IMR-90 (cell line): ENCODE measurements at regions of chr1 and their contacts with region 1.

Region 1: GRCh38 chr1:222455188-222455879 is 92.6 kb downstream of the HHIPL2 start:
- DNase-seq: peak; percentile 93
- ATAC-seq: peak; percentile 98
- H3K4me3 ChIP-seq: no peak overlapping the region; the same call in 1 of the 2 replicates
- H3K27ac ChIP-seq: peak overlapping the region; percentile 74
- H3K4me1 ChIP-seq: peaks cover 9% of the 10 kb centered on the region
- H3K27me3 ChIP-seq: no peaks in the 10 kb centered on the region
- CTCF ChIP-seq: peak; percentile 96
- POLR2A ChIP-seq: peak; percentile 56; the same call in 1 of the 2 replicates
- RAD21 ChIP-seq: peak; percentile 99

Region 2: DNA sequence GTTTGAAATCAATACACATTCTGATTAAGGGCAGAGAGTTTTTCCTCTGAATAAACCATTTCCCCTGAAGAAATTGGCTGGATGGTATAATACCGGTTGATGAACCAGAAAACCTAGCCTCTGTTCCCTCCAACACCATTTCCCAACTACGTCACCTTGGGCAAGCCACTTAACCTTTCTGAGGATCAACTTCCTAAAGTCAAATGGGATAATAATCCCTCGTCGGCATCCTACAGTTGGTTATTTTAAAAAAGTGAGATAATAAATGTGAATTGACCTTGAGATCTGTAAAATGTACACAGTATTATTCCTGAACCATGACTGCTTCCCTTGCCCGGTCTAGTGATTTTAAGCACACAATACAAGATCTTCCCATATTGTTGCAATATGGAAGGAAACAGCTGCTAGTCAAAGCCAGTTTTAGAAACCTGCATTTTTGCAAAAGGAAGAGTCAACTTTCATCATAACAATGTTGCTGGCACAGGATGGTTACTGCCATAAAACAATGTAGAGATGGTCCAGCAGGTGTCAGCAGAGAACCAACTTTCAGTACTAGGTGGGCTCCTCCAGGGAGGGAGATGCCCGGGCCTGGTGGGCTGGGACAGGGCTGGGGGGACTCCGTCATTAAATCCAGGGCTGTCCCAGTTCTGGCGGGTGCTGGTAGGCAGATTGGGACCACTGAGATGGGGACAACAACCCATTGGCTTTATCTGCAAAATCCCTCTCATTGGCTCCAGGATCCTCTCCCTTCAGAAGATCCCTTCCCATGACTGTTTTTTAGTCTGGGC is 1581.3 kb before region 1 on chr1:
- CTCF ChIA-PET with region 1: interaction called, 3 read pairs
- POLR2A ChIA-PET with region 1: no interaction called
- dilution Hi-C with region 1: no loop called
- in situ Hi-C with region 1: loop called (anchors 5 kb)
- intact Hi-C with region 1: loop called (anchors 10 kb)
- DNase-seq: peak; percentile 66
- ATAC-seq: peak; percentile 43
- H3K4me3 ChIP-seq: no peak overlapping the region
- H3K27ac ChIP-seq: no peak overlapping the region
- H3K4me1 ChIP-seq: no peaks in the 10 kb centered on the region
- H3K27me3 ChIP-seq: no peaks in the 10 kb centered on the region
- CTCF ChIP-seq: peak; percentile 76
- POLR2A ChIP-seq: no peak
- RAD21 ChIP-seq: peak; percentile 82

Region 3: DNA sequence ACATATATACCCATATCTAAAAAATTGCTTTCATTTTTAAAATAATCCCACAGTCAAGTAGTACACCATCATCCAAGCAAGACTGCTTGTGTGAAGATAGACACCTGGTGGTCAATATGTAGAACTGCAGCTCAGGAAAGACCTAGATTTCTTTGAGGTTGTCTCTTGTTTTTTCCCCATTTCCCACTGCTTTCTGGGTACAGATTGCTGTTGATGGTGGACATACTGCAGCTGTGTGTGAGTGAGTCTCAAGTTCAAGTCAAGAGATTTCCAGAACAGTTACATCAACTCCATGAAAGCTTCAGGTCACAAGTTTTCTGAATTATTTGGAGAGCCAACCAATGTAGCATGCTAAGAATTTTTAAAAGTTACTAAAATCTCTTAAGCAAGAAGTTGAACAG is 1019.8 kb before region 1 on chr1:
- CTCF ChIA-PET with region 1: interaction called, 8 read pairs
- POLR2A ChIA-PET with region 1: no interaction called
- dilution Hi-C with region 1: no loop called
- in situ Hi-C with region 1: loop called (anchors 10 kb)
- intact Hi-C with region 1: loop called (anchors 5 kb)
- DNase-seq: peak; percentile 83
- ATAC-seq: peak; percentile 70
- H3K4me3 ChIP-seq: no peak overlapping the region
- H3K27ac ChIP-seq: no peak overlapping the region
- H3K4me1 ChIP-seq: peaks cover 4% of the 10 kb centered on the region
- H3K27me3 ChIP-seq: no peaks in the 10 kb centered on the region
- CTCF ChIP-seq: peak; percentile 90
- POLR2A ChIP-seq: no peak
- RAD21 ChIP-seq: peak; percentile 89

Region 4: GRCh38 chr1:221557013-221557412 is 898.3 kb before region 1 on chr1:
- CTCF ChIA-PET with region 1: no interaction called
- POLR2A ChIA-PET with region 1: no interaction called
- dilution Hi-C with region 1: no loop called
- in situ Hi-C with region 1: loop called (anchors 10 kb)
- intact Hi-C with region 1: no loop called
- DNase-seq: no peak
- ATAC-seq: no peak
- H3K4me3 ChIP-seq: no peak overlapping the region
- H3K27ac ChIP-seq: no peak overlapping the region
- H3K4me1 ChIP-seq: no peaks in the 10 kb centered on the region; the same call in 1 of the 2 replicates
- H3K27me3 ChIP-seq: no peaks in the 10 kb centered on the region
- CTCF ChIP-seq: no peak
- POLR2A ChIP-seq: no peak
- RAD21 ChIP-seq: no peak

Region 5: GRCh38 chr1:221868593-221869303 is 586.6 kb before region 1 on chr1:
- CTCF ChIA-PET with region 1: interaction called, 4 read pairs
- POLR2A ChIA-PET with region 1: no interaction called
- dilution Hi-C with region 1: no loop called
- in situ Hi-C with region 1: no loop called
- intact Hi-C with region 1: loop called (anchors 5 kb)
- DNase-seq: peak; percentile 87
- ATAC-seq: peak; percentile 78
- H3K4me3 ChIP-seq: no peak overlapping the region
- H3K27ac ChIP-seq: no peak overlapping the region
- H3K4me1 ChIP-seq: peaks cover 11% of the 10 kb centered on the region
- H3K27me3 ChIP-seq: no peaks in the 10 kb centered on the region
- CTCF ChIP-seq: no peak
- POLR2A ChIP-seq: no peak
- RAD21 ChIP-seq: peak; percentile 12; the same call in 1 of the 2 replicates

Region 6: GRCh38 chr1:222124602-222125001 is 330.7 kb before region 1 on chr1:
- CTCF ChIA-PET with region 1: interaction called, 6 read pairs
- POLR2A ChIA-PET with region 1: no interaction called
- dilution Hi-C with region 1: no loop called
- in situ Hi-C with region 1: no loop called
- intact Hi-C with region 1: loop called (anchors 1 kb)
- DNase-seq: no peak
- ATAC-seq: no peak
- H3K4me3 ChIP-seq: no peak overlapping the region
- H3K27ac ChIP-seq: no peak overlapping the region
- H3K4me1 ChIP-seq: peaks cover 4% of the 10 kb centered on the region
- H3K27me3 ChIP-seq: no peaks in the 10 kb centered on the region
- CTCF ChIP-seq: 0 out of 2 replicates have a peak, but pooled peaks have one; percentile 28
- POLR2A ChIP-seq: no peak
- RAD21 ChIP-seq: peak; percentile 30

Region 7: GRCh38 chr1:222334026-222334680 is 121.2 kb before region 1 on chr1:
- CTCF ChIA-PET with region 1: interaction called, 5 read pairs
- POLR2A ChIA-PET with region 1: no interaction called
- dilution Hi-C with region 1: no loop called
- in situ Hi-C with region 1: no loop called
- intact Hi-C with region 1: loop called (anchors 2 kb)
- DNase-seq: peak; percentile 85
- ATAC-seq: no peak
- H3K4me3 ChIP-seq: no peak overlapping the region
- H3K27ac ChIP-seq: no peak overlapping the region
- H3K4me1 ChIP-seq: peaks cover 13% of the 10 kb centered on the region
- H3K27me3 ChIP-seq: no peaks in the 10 kb centered on the region
- CTCF ChIP-seq: no peak
- POLR2A ChIP-seq: no peak
- RAD21 ChIP-seq: no peak

Region 8: DNA sequence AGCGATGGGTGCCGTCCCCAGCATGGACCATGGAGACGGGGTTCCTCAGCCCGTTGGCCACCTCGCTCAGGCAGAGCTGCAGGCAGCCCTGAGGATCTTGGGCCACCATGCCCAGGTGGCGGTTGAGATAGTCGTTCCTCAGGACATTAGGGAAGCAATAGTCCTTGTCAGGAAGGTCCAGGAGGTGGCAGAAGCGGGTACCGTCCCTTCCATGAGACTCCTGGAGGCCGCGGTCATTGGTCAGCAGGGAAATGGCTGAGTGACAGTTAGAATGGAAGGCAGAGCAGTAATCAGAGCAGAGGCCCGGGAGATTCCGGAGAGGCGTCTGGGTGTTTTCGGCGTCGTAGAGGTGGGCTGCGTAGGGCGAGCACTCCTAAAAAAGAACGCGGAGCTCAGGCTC is 88.5 kb after region 1 on chr1:
- CTCF ChIA-PET with region 1: no interaction called
- POLR2A ChIA-PET with region 1: no interaction called
- dilution Hi-C with region 1: no loop called
- in situ Hi-C with region 1: no loop called
- intact Hi-C with region 1: no loop called
- DNase-seq: no peak
- ATAC-seq: no peak
- H3K4me3 ChIP-seq: no peak overlapping the region
- H3K27ac ChIP-seq: no peak overlapping the region
- H3K4me1 ChIP-seq: peaks cover 5% of the 10 kb centered on the region; the same call in 1 of the 2 replicates
- H3K27me3 ChIP-seq: no peaks in the 10 kb centered on the region
- CTCF ChIP-seq: no peak
- POLR2A ChIP-seq: no peak
- RAD21 ChIP-seq: no peak